GM10248 (cell line): ENCODE measurements at regions of chr20 and their contacts with region 1.

Region 1: DNA sequence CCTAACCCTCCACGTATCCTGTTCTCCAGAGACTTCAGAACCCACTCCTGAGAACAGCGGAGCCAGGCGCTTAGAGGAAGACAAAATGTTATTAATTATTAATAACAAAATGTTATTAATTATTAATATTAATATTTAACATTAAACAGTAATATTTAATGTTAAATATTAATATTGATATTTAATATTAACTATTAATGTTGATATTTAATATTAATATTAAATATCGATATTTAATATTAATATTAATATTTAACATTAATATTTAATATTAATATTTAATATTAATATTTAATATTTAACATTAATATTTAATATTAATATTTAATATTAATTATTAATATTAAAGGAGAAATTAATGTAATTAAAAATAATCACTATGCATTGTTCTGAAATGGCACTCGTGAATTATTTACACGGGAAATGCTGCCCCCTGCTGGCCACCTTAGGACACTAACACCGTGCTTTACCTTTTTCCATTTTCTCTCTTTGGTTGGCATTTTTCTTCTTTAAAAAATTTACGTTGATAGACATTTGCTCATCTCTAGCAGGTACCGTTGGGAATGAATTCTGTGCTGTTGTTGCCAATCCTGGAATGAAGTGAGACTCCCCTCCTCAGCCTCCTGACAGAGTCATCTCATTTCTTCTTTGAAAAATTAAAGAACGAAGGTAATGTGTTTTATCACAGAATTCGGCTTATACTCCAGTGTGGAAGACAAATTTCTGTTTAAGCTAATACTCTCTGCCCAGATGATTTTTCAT is 7.5 kb upstream of the GGTLC1 start:
- DNase-seq: peak; percentile 39
- CTCF ChIP-seq: peak; percentile 71

Region 2: DNA sequence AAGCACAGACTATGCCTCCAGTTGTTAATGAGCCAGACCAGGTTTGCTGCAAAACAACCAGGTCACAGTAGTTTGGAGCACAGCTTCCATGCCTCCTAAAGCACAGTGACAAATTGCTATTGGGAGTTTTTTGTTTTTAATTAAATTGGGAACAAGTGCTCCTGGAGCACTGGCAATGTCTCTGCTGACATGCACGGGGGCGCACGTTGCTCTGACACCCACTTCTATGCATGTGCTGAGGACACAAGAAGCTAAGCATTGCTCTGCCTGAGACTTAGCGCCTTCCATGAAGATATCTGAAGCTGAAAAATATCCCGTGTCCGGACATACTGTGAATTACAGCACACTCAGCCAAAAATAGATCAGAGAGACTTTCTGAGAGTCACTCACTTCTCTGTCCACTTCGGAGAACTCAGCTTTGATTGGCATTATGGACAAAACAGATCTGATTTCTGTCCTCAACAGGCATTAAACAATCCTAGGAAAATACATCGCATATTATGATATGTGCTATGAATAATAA is 11.0 kb after region 1 on chr20:
- CTCF ChIA-PET with region 1: interaction called, 12 read pairs
- POLR2A ChIA-PET with region 1: no interaction called
- DNase-seq: no peak
- CTCF ChIP-seq: no peak